Panc1 (cell line): ENCODE measurements at regions of chr3 and their contacts with region 1.

Region 1: DNA sequence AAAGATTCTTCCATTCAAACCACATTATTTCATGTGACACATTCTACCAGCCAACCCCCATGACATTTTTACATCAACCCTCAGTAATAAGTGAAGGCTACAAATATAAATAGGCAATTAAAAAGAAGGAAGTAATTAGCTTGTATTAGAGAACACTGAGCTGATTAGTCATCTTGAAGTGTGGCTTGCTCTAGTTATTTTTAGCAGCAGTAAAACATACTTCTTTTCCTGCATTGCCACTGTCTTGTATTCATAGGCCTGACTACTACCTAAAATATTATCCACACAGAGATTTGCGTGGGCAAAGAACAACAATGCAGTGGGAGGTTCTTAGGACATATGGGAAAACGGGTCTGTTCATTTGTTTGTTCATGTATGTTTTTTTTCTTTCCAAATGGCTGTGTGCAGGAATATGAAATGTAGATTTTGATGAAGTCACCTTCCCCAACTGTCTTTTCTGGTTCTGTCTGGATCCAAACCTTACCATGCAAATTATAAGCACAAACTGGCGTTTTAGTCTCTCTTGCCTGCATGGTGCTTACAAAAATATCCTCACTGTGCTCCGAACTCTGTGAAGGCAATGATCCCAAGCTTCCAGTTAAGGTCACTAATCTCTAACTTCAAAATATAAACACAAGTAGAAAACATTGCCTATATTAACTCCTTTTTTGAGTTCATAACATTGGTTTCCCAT is 31.5 kb upstream of the TM4SF4 start:
- DNase-seq: peak; percentile 8
- ATAC-seq: no peak
- H3K4me3 ChIP-seq: no peak overlapping the region
- H3K27ac ChIP-seq: peak overlapping the region; percentile 29; the same call in 1 of the 2 replicates
- H3K4me1 ChIP-seq: peaks cover 10% of the 10 kb centered on the region; the same call in 1 of the 2 replicates
- H3K27me3 ChIP-seq: no peaks in the 10 kb centered on the region
- CTCF ChIP-seq: no peak

Region 2: GRCh38 chr3:149428087-149428486 is 14.9 kb before region 1 on chr3:
- CTCF ChIA-PET with region 1: interaction called, 3 read pairs
- POLR2A ChIA-PET with region 1: interaction called, 21 read pairs
- in situ Hi-C with region 1: no loop called
- intact Hi-C with region 1: no loop called
- DNase-seq: no peak
- ATAC-seq: no peak
- H3K4me3 ChIP-seq: no peak overlapping the region
- H3K27ac ChIP-seq: no peak overlapping the region
- H3K4me1 ChIP-seq: no peaks in the 10 kb centered on the region
- H3K27me3 ChIP-seq: no peaks in the 10 kb centered on the region
- CTCF ChIP-seq: no peak